IMR-90 (cell line): ENCODE measurements at regions of chr1 and their contacts with region 1.

Region 1: GRCh38 chr1:84301004-84301784 is at the start of gene SAMD13:
- DNase-seq: peak; percentile 69
- ATAC-seq: no peak
- H3K4me3 ChIP-seq: peak within 1 kb of the TSS; percentile 51; the same call in 1 of the 2 replicates
- H3K27ac ChIP-seq: peak within 1 kb of the TSS; percentile 87
- H3K4me1 ChIP-seq: peaks cover 17% of the 10 kb centered on the region
- H3K27me3 ChIP-seq: no peaks in the 10 kb centered on the region
- CTCF ChIP-seq: no peak
- POLR2A ChIP-seq: no peak
- RAD21 ChIP-seq: no peak
- total RNA-seq, gene SAMD13: 0.36 and 0.56 TPM in 2 replicates

Region 2: DNA sequence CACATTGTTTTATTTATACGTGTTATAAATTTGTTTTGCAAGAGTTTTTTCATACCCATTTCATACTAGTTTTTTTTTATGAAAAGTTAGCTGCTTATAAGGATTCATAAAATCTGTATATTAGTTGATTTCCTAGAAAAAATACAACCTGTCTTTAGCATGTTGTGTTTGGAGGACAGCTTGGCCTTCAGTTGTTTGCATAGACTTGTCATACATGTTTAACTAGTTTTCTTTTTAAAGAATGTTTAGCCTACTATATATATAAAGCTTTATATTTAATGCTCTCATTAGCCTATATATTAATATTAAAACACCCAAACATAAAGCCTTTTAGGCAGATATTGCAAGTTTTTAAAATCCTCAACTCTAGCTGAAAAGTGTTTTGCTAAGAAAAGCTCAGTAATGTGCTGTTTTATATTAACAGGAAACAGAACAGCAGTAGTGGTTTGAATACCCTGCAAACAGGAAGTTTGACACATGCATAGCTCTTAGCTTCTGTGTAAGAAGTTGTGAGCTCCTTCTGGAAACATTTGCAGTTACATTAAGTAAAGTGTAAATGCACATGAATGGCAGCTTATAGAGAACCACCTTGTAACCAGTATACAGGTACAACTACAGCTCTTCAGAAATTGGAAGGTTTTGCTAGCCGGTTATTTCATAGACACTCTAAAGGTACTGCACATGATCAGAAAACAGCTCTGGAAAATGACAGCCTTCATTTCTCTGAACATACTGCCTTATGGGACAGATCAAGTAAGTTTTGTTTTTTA is 157.2 kb before region 1 on chr1 and contains the start of gene PRKACB:
- CTCF ChIA-PET with region 1: interaction called, 3 read pairs
- POLR2A ChIA-PET with region 1: no interaction called
- dilution Hi-C with region 1: no loop called
- in situ Hi-C with region 1: no loop called
- intact Hi-C with region 1: loop called (anchors 5 kb)
- DNase-seq: peak; percentile 62
- ATAC-seq: peak; percentile 68
- H3K4me3 ChIP-seq: no peak within 1 kb of the TSS
- H3K27ac ChIP-seq: no peak within 1 kb of the TSS
- H3K4me1 ChIP-seq: peaks cover 5% of the 10 kb centered on the region
- H3K27me3 ChIP-seq: no peaks in the 10 kb centered on the region
- CTCF ChIP-seq: no peak
- POLR2A ChIP-seq: no peak
- RAD21 ChIP-seq: no peak
- total RNA-seq, gene PRKACB: 8.2 and 14.2 TPM in 2 replicates

Region 3: DNA sequence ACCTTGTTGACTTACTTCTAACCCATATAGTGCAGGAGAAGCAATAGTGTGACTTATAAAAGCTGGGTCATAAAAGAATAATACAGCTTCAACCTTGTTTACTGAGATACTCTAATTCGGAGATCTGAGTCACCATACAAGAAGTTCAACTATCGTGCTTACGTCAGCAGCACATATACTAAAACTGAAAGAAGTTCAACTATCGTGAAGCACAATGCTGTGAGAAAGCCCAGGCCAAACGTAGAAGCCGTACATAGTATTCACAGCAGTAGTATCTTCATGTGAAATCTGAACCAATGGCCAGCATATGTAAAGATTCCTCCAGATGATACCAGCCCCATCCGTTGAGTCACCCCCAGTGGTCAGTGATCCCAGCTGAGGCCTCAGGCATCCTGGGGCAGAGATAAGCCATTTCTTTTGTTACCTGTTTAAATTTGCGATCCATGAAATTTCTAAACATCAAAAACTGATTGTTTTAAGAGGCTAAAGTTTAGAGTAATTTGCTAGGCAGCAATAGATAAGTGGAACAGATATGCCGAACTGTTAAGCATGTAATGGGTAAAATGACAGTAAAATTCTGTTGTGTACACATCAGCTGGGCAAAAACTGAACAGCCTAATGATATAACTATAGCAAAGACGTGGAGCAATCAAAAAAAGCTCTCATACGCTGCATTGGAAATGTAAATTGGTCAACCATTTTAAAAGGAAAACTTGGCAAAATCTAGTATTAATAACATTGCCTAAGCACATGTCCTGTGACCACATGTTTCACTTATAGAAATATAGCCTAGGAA is 53.6 kb before region 1 on chr1:
- CTCF ChIA-PET with region 1: no interaction called
- POLR2A ChIA-PET with region 1: no interaction called
- dilution Hi-C with region 1: no loop called
- in situ Hi-C with region 1: no loop called
- intact Hi-C with region 1: no loop called
- DNase-seq: peak; percentile 96
- ATAC-seq: peak; percentile 93
- H3K4me3 ChIP-seq: no peak overlapping the region
- H3K27ac ChIP-seq: peak overlapping the region; percentile 62; the same call in 1 of the 2 replicates
- H3K4me1 ChIP-seq: peaks cover 7% of the 10 kb centered on the region; the same call in 1 of the 2 replicates
- H3K27me3 ChIP-seq: no peaks in the 10 kb centered on the region
- CTCF ChIP-seq: no peak
- POLR2A ChIP-seq: 0 out of 2 replicates have a peak, but pooled peaks have one; percentile 43
- RAD21 ChIP-seq: no peak

Region 4: DNA sequence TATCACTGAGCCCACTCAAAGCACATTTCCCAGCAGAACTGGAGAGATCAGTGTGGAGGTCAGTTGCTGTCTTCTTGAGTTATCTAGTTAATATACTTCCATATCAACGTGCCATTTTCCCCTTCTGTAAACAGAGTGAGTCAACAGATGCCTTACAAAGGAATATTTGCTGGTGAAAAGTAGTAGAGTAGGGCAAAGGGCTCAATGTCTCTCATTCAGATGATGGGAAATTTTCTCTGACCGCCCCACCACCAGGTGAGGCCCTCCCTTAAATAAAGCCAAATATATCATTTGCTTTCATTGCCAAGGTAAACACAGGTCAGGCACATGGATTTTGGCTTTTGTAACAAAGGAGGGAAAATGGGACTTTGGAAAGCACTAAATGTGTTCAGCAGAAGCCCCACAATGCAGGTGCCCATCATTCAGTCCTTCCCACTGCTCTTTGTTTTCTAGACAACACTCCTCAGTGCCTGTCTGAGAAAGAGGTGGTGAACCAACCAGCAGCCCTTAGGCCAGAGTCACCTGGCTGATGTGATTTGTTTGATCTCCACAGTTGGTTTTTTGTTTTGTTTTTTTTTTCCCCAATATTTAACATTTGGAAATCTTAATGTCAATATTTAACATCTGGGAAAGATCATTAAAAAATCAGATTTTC is 40.2 kb before region 1 on chr1:
- CTCF ChIA-PET with region 1: no interaction called
- POLR2A ChIA-PET with region 1: no interaction called
- dilution Hi-C with region 1: no loop called
- in situ Hi-C with region 1: no loop called
- intact Hi-C with region 1: no loop called
- DNase-seq: peak; percentile 38
- ATAC-seq: peak; percentile 78
- H3K4me3 ChIP-seq: no peak overlapping the region
- H3K27ac ChIP-seq: no peak overlapping the region
- H3K4me1 ChIP-seq: peaks cover 6% of the 10 kb centered on the region
- H3K27me3 ChIP-seq: no peaks in the 10 kb centered on the region
- CTCF ChIP-seq: no peak
- POLR2A ChIP-seq: no peak
- RAD21 ChIP-seq: no peak

Region 5: GRCh38 chr1:84377480-84378095 is 76.4 kb after region 1 on chr1:
- CTCF ChIA-PET with region 1: no interaction called
- POLR2A ChIA-PET with region 1: no interaction called
- dilution Hi-C with region 1: no loop called
- in situ Hi-C with region 1: no loop called
- intact Hi-C with region 1: loop called (anchors 5 kb)
- DNase-seq: peak; percentile 92
- ATAC-seq: peak; percentile 71
- H3K4me3 ChIP-seq: no peak overlapping the region
- H3K27ac ChIP-seq: no peak overlapping the region
- H3K4me1 ChIP-seq: peaks cover 20% of the 10 kb centered on the region
- H3K27me3 ChIP-seq: no peaks in the 10 kb centered on the region
- CTCF ChIP-seq: no peak
- POLR2A ChIP-seq: no peak
- RAD21 ChIP-seq: no peak

Region 6: GRCh38 chr1:84415396-84415795 is 114.2 kb after region 1 on chr1:
- CTCF ChIA-PET with region 1: no interaction called
- POLR2A ChIA-PET with region 1: no interaction called
- dilution Hi-C with region 1: no loop called
- in situ Hi-C with region 1: no loop called
- intact Hi-C with region 1: loop called (anchors 2 kb)
- DNase-seq: peak; percentile 41
- ATAC-seq: no peak
- H3K4me3 ChIP-seq: no peak overlapping the region
- H3K27ac ChIP-seq: no peak overlapping the region
- H3K4me1 ChIP-seq: peaks cover 12% of the 10 kb centered on the region
- H3K27me3 ChIP-seq: no peaks in the 10 kb centered on the region
- CTCF ChIP-seq: no peak
- POLR2A ChIP-seq: no peak
- RAD21 ChIP-seq: no peak